Mammary epithelial cell (primary cell): ENCODE measurements at regions of chr22 and their contacts with region 1.

Region 1: DNA sequence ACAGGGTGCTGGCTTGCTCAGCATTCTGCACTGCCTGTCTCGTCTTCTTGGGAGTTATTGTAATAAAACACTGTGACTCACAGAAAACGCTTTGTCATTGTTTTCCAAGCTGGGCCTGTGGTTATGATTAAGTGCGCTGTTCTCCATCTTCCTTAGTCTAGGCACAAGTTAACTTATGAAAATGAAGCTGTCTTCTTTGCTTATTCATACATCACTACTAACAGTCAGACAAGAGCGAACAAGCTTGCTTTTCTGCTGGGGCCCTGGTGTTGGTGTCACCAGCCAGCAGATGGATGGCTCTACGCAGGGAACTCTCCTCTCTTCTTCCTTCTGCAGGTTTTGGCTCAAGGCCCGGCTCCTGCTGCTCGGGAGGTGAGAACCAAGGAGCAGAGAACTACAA is 380.1 kb upstream of the SYN3 start:
- DNase-seq: peak; percentile 99
- H3K4me3 ChIP-seq: no peak overlapping the region
- H3K27ac ChIP-seq: no peak overlapping the region
- H3K4me1 ChIP-seq: peaks cover 13% of the 10 kb centered on the region
- H3K27me3 ChIP-seq: no peaks in the 10 kb centered on the region
- CTCF ChIP-seq: peak in 1 of 2 donors; percentile 17

Region 2: GRCh38 chr22:33380789-33381530 is 57.3 kb before region 1 on chr22:
- CTCF ChIA-PET with region 1: no interaction called
- dilution Hi-C with region 1: no loop called
- in situ Hi-C with region 1: no loop called
- intact Hi-C with region 1: loop called (anchors 1 kb)
- DNase-seq: peak; percentile 96
- H3K4me3 ChIP-seq: no peak overlapping the region
- H3K27ac ChIP-seq: peak overlapping the region; percentile 14
- H3K4me1 ChIP-seq: peaks cover 19% of the 10 kb centered on the region
- H3K27me3 ChIP-seq: no peaks in the 10 kb centered on the region
- CTCF ChIP-seq: no peak

Region 3: GRCh38 chr22:33389936-33390335 is 48.3 kb before region 1 on chr22:
- CTCF ChIA-PET with region 1: interaction called, 12 read pairs
- dilution Hi-C with region 1: no loop called
- in situ Hi-C with region 1: no loop called
- intact Hi-C with region 1: no loop called
- DNase-seq: no peak
- H3K4me3 ChIP-seq: no peak overlapping the region
- H3K27ac ChIP-seq: no peak overlapping the region
- H3K4me1 ChIP-seq: no peaks in the 10 kb centered on the region
- H3K27me3 ChIP-seq: no peaks in the 10 kb centered on the region
- CTCF ChIP-seq: no peak